Left cardiac atrium (tissue), 4 donors: ENCODE measurements at regions of chr5 and their contacts with region 1.

Region 1: DNA sequence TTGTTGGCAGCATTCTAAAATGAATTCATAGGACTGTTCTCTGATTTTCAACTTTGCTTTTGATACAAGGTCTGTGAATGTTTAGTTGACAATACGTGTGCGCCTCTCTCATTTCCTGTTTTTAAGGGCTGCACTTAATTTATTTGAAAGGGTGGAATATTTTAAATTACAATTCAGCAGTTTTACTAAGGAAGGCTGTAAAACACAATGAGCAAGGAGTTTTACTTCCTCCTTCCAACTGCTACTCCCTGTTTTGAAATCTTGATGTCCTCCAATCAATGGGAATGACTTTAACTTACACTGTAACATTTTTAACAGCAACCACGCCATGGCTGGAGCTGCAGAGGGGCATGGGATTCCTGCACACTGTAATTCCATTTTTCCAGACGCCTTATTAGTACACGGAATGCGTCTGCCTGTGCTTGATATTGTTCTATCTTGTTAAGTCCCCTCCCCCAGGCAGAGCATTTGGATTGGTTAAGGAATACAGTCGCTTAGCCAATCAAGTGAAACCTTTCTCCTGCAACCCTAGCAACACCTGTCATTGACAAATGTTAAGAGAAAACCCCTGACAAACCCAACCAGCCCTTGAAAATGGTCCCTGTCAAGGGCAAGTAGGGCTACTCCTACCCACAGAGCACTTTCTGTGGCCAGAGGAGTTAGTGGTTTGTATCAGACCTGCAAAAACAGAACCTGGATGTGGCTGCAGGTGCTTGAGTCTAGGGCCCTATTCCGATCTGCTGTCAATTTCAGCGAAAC is 12.5 kb upstream of the ZSWIM6 start:
- DNase-seq: no peak
- ATAC-seq: peak; percentile 67 to 70

Region 2: DNA sequence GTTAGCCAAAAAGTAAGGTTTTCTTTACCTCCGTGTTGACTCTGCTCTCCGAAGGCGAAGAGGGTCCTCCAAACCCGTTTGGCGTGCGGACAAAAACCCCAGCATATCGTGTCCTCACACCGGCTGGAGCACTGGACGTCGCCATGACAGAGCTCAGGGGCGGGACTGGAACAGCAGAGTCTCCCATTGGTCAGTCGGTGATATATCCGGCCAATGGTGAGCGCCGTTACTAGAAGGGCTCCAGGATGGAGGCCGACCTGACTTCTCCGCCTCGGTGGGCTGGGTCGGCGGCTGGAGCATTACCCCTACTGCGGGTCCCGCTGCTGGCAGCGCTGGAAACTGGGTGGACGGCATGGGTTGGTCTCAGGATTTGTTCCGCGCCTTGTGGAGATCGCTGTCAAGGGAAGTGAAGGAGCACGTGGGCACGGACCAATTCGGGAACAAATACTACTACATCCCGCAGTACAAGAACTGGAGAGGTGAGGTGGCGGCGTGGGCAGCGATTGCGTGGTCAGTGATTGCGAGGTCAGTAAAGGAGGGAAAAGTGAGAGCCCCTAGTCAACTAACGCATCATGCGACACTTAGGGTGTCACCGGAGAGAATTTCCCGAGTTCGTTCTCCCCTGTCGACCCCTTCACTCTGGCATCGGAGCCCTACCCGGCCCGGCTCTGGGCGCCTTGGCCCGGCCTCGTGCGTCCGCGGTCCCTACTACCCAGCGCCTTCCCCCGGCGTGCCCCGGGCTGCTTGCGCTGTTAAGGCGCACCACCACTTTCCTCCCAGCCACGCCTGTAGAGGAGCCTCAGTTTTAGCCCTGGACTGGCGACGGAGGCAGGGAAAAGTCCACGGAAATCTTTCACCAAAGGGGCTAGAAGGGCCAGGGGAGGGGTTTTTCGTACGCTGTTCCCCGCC is 374.4 kb before region 1 on chr5 and contains the starts of genes ERCC8 and NDUFAF2:
- intact Hi-C with region 1: loop called in 1 of 2 experiments (anchors 10 kb)
- DNase-seq: peak; percentile 94
- ATAC-seq: peak; percentile 100
- total RNA-seq, gene ERCC8: 6.1 to 9.0 TPM
- total RNA-seq, gene NDUFAF2: 34.5 to 42.8 TPM

Region 3: DNA sequence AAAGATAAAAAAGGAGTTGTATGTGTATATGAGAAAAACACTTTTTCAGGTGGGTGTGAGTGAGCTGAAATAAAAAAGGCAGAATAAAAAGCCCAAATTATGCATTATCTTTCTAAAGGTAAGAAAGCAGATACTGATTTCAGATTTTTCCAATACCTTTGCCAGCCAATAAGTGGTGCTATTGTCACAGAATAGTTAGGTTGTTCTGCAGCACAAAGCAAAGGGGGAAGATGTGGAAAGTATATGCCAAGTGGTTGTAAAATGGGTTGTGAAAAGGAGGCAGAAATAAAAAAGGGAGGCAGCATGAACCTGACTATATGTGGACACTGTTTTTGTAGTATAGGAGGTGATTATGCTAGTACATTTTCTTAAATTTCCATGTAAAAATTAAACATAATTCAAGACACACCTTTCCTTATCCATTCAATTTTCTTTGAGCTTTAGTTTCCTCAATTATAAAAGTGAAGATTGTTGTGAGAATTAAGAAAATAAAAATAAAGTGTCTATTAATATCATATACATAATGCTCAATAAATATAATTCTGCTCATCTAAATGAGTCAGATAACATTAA is 264.0 kb before region 1 on chr5:
- intact Hi-C with region 1: loop called in 1 of 2 experiments (anchors 10 kb)
- DNase-seq: no peak
- ATAC-seq: peak; percentile 22 to 41